HCT116 (cell line): ENCODE measurements at regions of chr17 and their contacts with region 1.

Region 1: DNA sequence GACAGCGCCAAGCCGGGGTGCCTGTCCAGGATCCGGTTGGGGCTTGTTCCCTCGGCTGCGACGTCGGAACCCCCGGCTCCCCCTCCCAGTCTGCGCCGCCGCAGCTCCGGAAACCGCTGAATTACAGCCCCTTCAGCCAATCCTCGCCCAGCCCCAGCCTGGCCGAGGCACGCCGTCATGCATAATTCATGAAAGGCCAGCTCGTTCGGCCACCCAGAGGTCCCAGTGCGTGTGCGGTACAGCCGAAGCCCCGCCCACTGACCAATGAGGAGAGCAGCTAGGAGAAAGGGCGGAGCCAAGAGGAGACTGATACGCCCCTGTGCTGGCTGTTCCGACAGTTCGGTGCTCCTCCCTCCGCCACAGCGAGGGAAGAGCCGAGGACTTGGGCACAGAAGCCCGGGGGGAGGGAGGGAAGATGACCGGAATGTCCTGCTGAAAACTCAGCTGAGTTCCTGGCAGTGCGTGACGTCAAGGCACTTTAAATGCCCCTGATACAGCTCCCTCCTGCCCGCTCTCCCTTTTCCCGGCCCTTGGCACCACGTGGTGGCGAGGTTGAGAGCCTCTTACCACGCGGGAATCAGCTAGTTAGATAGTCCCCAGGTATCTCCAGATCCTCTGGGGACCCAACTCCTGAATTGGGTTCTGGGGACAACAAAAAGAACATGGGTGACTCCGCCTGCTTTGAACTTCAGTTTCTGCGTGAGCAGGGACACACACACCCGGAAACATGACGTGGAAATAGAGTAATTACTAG is at the start of gene STAT3:
- DNase-seq: peak; percentile 99
- ATAC-seq: peak; percentile 98
- H3K4me3 ChIP-seq: peak within 1 kb of the TSS; percentile 86 to 87
- H3K27ac ChIP-seq: peak within 1 kb of the TSS; percentile 66
- H3K4me1 ChIP-seq: peaks cover 19 to 25% of the 10 kb centered on the region in 2 experiments
- H3K27me3 ChIP-seq: no peaks in the 10 kb centered on the region
- CTCF ChIP-seq: no peak
- POLR2A ChIP-seq: peak; percentile 49
- RAD21 ChIP-seq: peak; percentile 24; the same call in 1 of the 2 replicates
- total RNA-seq, gene STAT3: 61.0 TPM

Region 2: DNA sequence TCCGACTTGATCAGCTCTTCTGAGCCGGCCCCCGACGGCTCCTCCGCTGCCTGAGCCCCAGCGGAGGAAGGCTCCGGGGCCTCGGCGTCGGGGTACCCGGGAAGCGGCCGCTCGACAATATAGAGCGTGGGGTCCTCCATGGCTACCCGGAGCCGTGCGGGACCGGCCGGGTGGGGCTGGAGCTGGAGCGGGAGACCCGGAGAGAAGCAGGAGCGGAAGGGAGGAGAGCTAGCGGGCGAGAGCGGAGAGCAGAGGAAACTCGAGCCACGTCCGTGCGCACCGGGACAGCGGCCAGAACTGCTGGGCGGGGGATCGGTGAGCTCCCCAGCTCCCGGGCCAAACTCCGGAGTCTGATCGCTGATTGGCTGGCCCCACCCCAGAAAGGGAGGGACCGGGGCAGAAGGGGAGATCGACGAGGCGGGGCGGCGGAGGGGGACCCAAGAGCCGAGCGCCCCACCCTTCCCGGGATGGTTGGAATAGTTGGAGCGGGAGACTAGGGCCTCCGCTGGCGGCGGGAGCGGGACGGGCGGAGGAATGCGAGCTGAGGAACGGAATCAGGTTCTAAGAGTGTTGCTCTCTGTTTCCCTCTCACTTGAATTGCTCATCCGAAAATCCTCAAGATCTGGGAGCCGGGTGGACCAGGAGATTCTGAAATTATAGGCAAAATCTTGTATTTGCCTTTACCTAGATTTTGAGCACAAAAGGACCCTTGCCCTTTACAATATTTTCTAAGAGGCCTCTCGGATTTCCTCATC is 34.6 kb after region 1 on chr17 and contains the start of gene CAVIN1:
- CTCF ChIA-PET with region 1: no interaction called
- POLR2A ChIA-PET with region 1: interaction called, 19 read pairs
- RAD21 ChIA-PET with region 1: no interaction called
- intact Hi-C with region 1: no loop called
- DNase-seq: peak; percentile 85
- ATAC-seq: peak; percentile 79
- H3K4me3 ChIP-seq: peak within 1 kb of the TSS; percentile 90 to 94
- H3K27ac ChIP-seq: peak within 1 kb of the TSS; percentile 99
- H3K4me1 ChIP-seq: peaks cover 33 to 63% of the 10 kb centered on the region in 2 experiments
- H3K27me3 ChIP-seq: no peaks in the 10 kb centered on the region
- CTCF ChIP-seq: no peak
- POLR2A ChIP-seq: peak; percentile 97
- RAD21 ChIP-seq: no peak
- total RNA-seq, gene CAVIN1: 79.7 TPM